Activated CD8-positive, alpha-beta T cell treated with anti-CD3 and anti-CD28 coated beads, Interleukin-2, amount 10 ng/mL, durations not matched to agents 7 days and 5 days (primary cell): ENCODE measurements at regions of chr5 and their contacts with region 1.

Region 1: GRCh38 chr5:43484106-43484849 is 613 bp upstream of the TMEM267 start:
- DNase-seq: peak; percentile 94
- ATAC-seq: peak; percentile 72
- H3K4me3 Mint-ChIP-seq: peak overlapping the region; percentile 97
- H3K27ac Mint-ChIP-seq: peak overlapping the region; percentile 100
- H3K4me1 Mint-ChIP-seq: peaks cover 38% of the 10 kb centered on the region
- H3K27me3 Mint-ChIP-seq: no peaks in the 10 kb centered on the region

Region 2: GRCh38 chr5:42994246-42995151 is 489.8 kb before region 1 on chr5:
- CTCF ChIA-PET with region 1: interaction called, 3 read pairs
- POLR2A ChIA-PET with region 1: interaction called, 26 read pairs
- DNase-seq: peak; percentile 94
- ATAC-seq: peak; percentile 60
- H3K4me3 Mint-ChIP-seq: peak overlapping the region; percentile 94
- H3K27ac Mint-ChIP-seq: peak overlapping the region; percentile 99
- H3K4me1 Mint-ChIP-seq: peaks cover 19% of the 10 kb centered on the region
- H3K27me3 Mint-ChIP-seq: no peaks in the 10 kb centered on the region

Region 3: GRCh38 chr5:43066799-43067741 is 417.2 kb before region 1 on chr5:
- CTCF ChIA-PET with region 1: interaction called, 9 read pairs
- POLR2A ChIA-PET with region 1: interaction called, 25 read pairs
- DNase-seq: peak; percentile 91
- ATAC-seq: peak; percentile 59
- H3K4me3 Mint-ChIP-seq: peak overlapping the region; percentile 94
- H3K27ac Mint-ChIP-seq: peak overlapping the region; percentile 99
- H3K4me1 Mint-ChIP-seq: peaks cover 43% of the 10 kb centered on the region
- H3K27me3 Mint-ChIP-seq: no peaks in the 10 kb centered on the region

Region 4: DNA sequence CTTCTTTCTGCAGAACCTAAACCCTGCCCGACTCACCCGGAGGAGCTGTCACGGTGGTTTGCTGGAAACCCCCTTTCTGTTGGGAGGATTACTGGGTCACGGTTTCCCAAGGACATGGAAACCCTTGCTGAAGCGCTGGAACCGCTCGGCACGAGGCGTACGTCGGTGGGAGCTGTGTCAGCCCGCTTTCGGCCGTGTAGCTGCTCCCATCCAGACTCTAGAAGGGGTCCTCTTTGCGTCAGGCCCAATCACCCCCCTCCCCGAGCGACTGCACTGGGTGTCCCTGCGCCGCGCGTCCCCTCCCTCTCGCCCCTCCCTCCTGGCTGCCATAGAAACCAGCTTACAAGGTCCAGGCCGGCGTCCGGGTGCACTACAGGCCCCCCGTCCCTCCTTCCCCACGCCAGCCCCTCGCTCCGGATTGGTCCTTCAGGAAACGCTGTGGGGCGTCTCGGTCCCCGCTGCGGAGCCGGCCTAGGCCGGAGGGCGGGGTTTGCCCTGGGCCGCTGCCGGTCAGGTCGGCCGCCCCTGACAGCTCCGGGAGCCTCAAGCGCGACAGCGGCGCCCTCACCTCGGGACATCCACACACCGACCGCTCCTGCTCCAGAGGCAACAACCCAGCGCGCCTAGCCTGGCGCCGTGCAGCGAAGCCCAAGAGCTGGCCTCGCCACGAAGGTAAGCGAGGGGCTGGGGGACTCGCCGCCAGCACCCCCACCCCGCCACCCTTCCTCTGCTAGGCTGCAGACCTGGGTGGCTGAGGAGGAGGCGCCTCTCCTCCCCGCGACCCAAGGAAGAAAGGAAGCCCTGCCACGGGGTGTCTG is 292.3 kb before region 1 on chr5 and contains the start of gene NIM1K:
- CTCF ChIA-PET with region 1: no interaction called
- POLR2A ChIA-PET with region 1: interaction called, 10 read pairs
- DNase-seq: peak; percentile 42
- ATAC-seq: peak; percentile 76
- H3K4me3 Mint-ChIP-seq: peak within 1 kb of the TSS; percentile 77
- H3K27ac Mint-ChIP-seq: peak within 1 kb of the TSS; percentile 28
- H3K4me1 Mint-ChIP-seq: peaks cover 28% of the 10 kb centered on the region
- H3K27me3 Mint-ChIP-seq: peaks cover 21% of the 10 kb centered on the region
- total RNA-seq, gene NIM1K: 0.50 to 0.61 TPM

Region 5: DNA sequence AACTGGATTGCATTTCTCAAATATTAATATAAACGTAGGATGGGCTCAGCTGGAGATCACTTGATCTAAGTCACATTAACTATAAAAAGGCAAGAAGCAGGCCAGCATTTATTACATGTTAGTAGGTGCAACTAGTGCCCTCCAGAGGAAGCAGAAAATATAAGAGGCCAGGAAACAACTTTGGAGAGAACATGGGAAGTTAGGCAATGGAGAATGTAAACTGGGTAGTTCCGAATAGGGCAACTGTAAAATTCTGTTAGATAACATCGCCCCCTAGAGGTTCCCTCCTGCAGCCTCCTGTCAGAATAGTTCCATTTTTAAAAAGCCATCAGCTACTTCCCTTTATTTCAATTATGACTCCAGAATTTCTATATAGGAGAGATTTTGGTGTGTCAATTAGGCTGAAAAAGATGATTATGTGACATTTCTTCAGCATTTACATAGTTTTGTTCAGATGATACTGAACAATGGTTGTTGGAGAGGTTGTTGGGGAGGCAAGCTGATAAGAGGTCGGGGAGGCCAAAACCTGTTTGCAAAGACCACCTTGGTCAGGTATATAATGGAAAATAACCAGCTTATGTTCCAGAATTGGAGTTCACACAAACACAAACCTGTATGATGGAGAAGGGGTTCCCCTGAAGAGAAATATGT is 94.5 kb before region 1 on chr5:
- CTCF ChIA-PET with region 1: interaction called, 38 read pairs
- POLR2A ChIA-PET with region 1: interaction called, 10 read pairs
- DNase-seq: peak; percentile 65
- ATAC-seq: peak; percentile 84
- H3K4me3 Mint-ChIP-seq: no peak overlapping the region
- H3K27ac Mint-ChIP-seq: peak overlapping the region; percentile 28
- H3K4me1 Mint-ChIP-seq: peaks cover 11% of the 10 kb centered on the region
- H3K27me3 Mint-ChIP-seq: no peaks in the 10 kb centered on the region

Region 6: DNA sequence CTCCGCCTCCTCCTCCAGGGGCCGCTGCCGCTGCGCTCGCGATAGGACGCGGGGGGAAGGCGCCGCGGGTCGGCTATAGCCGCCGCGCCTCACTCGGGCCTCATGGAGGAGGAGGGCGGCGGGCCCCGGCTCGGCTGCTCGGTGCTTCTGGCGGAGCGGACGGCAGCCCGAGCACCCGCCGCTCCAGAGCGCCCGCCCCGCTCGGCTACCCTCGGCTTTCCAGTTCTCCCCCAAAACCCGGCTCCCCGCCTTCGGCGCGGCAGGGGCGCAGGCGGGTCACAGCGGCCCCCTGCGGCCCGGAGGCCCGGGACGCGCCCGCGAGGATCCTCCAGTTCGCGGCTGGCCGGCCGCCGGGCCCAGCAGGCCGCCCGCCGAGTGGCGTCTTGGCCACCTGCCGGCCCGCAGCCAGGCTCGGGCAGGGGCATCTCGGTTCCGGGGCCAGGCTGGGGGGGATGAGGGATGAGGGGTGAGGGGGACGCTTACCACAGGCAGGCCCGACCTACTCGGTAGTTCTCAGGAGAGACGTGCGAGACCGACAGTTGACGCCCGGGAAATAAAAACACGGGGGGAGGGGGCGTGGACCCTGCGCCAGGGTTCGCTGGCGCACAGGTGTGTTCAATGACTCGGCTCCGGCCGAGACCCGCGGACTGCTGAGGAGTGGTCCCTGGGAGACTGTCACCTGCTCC is 72.7 kb after region 1 on chr5 and contains the start of gene PAIP1:
- CTCF ChIA-PET with region 1: interaction called, 26 read pairs
- POLR2A ChIA-PET with region 1: interaction called, 39 read pairs
- DNase-seq: peak; percentile 84
- ATAC-seq: peak; percentile 92
- H3K4me3 Mint-ChIP-seq: peak within 1 kb of the TSS; percentile 92
- H3K27ac Mint-ChIP-seq: peak within 1 kb of the TSS; percentile 94
- H3K4me1 Mint-ChIP-seq: peaks cover 13% of the 10 kb centered on the region
- H3K27me3 Mint-ChIP-seq: peaks cover 16% of the 10 kb centered on the region
- total RNA-seq, gene PAIP1: 31.8 to 36.3 TPM

Region 7: GRCh38 chr5:43638546-43638945 is 154.3 kb after region 1 on chr5:
- CTCF ChIA-PET with region 1: no interaction called
- POLR2A ChIA-PET with region 1: no interaction called
- DNase-seq: no peak
- ATAC-seq: no peak
- H3K4me3 Mint-ChIP-seq: no peak overlapping the region
- H3K27ac Mint-ChIP-seq: no peak overlapping the region
- H3K4me1 Mint-ChIP-seq: no peaks in the 10 kb centered on the region
- H3K27me3 Mint-ChIP-seq: no peaks in the 10 kb centered on the region